ENCODE measurements at regions of chr4 and their contacts with region 1.

Region 1: GRCh38 chr4:122922877-122923511 is 597 bp upstream of the NUDT6 start:
- DNase-seq: peak; percentile 88
- H3K4me3 ChIP-seq: peak overlapping the region; percentile 85
- H3K27ac ChIP-seq: peak overlapping the region; percentile 51
- H3K27me3 ChIP-seq: no peaks in the 10 kb centered on the region
- CTCF ChIP-seq: peak; percentile 8

Region 2: DNA sequence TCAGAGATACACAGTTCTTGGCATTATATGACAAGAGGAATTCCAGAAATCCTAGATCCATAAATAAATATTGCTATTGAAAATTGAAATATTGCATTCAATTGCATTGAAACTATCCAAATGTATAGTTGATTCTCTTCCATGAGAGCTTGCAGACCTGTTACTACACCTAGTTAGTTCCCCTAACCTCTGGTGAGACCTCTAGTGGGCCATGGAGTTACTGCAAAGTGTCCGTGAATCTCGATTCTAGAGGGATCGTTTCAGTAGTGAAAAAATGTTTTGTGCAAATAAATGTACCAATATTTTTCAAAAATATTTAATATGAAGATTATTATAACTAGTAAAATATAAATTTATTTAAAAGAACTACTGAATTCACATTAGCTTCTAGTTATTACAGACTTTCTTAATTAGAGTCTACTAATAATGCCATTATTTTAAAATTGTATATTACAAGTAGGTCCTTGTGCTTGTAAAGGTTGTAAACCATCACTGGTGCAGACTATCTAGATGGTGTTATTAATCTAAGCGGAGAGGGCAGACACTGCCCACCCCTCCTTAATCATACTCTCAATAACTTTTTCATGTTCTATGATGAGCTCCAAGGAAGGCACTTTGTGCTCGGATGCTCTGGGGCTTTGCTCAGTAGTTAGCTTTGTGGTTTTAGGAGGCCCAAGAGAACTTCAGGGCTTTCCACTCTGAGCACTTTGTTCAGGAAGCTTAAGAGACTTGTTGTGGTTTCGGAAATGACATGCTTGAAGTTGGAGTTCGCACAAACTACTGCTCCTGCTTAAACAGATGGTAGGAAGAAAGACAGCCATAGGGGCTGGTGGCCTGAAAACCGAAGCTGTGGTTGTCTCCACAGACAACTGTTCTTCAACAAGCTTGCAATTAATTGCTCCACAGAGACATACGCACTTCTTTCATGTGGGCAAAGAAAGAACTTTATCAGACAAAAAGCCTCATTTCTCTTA is 344.9 kb before region 1 on chr4:
- in situ Hi-C with region 1: loop called (anchors 25 kb)
- DNase-seq: peak; percentile 47
- H3K4me3 ChIP-seq: no peak overlapping the region
- H3K27ac ChIP-seq: no peak overlapping the region
- H3K27me3 ChIP-seq: no peaks in the 10 kb centered on the region
- CTCF ChIP-seq: peak; percentile 82

Region 3: GRCh38 chr4:122758033-122758432 is 165.0 kb before region 1 on chr4:
- in situ Hi-C with region 1: loop called (anchors 25 kb)
- DNase-seq: no peak
- H3K4me3 ChIP-seq: no peak overlapping the region
- H3K27ac ChIP-seq: no peak overlapping the region
- H3K27me3 ChIP-seq: no peaks in the 10 kb centered on the region
- CTCF ChIP-seq: peak; percentile 51

Region 4: DNA sequence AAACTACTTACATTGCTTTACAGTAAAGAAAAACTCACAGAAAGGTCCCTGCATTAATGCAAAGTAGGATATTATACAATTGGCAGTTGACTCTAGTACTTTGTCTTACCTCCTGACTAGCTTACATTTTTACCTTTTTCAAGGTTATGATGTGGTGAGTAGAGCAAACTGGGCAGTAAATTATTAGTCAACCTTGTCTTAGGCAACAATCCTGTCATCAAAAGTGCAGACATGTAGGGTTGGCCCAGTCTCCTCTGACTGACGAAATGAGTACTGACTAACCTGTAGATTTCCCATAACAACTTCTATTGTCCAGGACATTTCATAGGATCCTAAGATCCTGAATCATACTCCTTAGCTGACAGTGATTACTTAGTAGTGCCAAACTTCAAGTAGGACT is 141.4 kb after region 1 on chr4:
- in situ Hi-C with region 1: no loop called
- DNase-seq: no peak
- H3K4me3 ChIP-seq: no peak overlapping the region
- H3K27ac ChIP-seq: no peak overlapping the region
- H3K27me3 ChIP-seq: no peaks in the 10 kb centered on the region
- CTCF ChIP-seq: no peak